Breast epithelium (tissue), 4 donors: ENCODE measurements at regions of chr16 and their contacts with region 1.

Region 1: GRCh38 chr16:81243942-81244341 is 5.5 kb downstream of the BCO1 start:
- DNase-seq: no peak
- H3K4me3 ChIP-seq: no peak overlapping the region
- H3K27ac ChIP-seq: no peak overlapping the region
- H3K4me1 ChIP-seq: no peaks in the 10 kb centered on the region
- H3K27me3 ChIP-seq: no peaks in the 10 kb centered on the region
- CTCF ChIP-seq: no peak
- POLR2A ChIP-seq: no peak

Region 2: GRCh38 chr16:81314603-81315270 is 70.8 kb after region 1 on chr16 and contains the start of gene GAN:
- intact Hi-C with region 1: loop called (anchors 5 kb)
- DNase-seq: peak; percentile 97
- H3K4me3 ChIP-seq: peak within 1 kb of the TSS; percentile 89 to 99 (median 92)
- H3K27ac ChIP-seq: peak within 1 kb of the TSS; percentile 95 to 97
- H3K4me1 ChIP-seq: peaks cover 0 to 13% of the 10 kb centered on the region in 2 donors
- H3K27me3 ChIP-seq: no peaks in the 10 kb centered on the region
- CTCF ChIP-seq: peak in 1 of 3 donors; percentile 8
- POLR2A ChIP-seq: peak; percentile 81
- total RNA-seq, gene GAN: 7.5 to 15.7 (median 10.8) TPM